ENCODE measurements at regions of chr18 and their contacts with region 1.

Region 1: GRCh38 chr18:74476140-74476539 is 19.0 kb upstream of the DIPK1C start:
- DNase-seq: no peak
- H3K4me3 ChIP-seq: no peak overlapping the region
- H3K27ac ChIP-seq: no peak overlapping the region
- H3K4me1 ChIP-seq: no peaks in the 10 kb centered on the region
- H3K27me3 ChIP-seq: no peaks in the 10 kb centered on the region
- CTCF ChIP-seq: no peak
- EP300 ChIP-seq: no peak
- POLR2A ChIP-seq: no peak

Region 2: DNA sequence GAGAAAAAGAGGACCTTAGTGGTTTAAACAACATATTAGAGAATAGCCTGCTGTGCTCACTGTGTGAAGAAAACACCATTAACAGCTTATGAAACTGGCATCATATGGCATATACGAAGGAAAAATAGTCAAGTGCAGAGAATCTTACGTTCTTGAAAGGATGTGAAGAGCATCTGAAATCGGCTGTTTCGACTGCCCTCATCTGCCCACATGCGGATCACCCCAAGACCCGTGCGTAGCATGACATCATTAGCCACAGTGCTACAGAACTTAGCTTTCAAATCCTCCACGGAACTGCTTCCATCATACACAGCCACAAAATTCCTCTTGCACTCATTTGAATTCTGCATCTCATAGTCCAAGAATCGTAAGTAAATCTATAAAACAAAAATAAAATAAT is 1692.6 kb before region 1 on chr18:
- intact Hi-C with region 1: no loop called
- DNase-seq: no peak
- H3K4me3 ChIP-seq: no peak overlapping the region
- H3K27ac ChIP-seq: no peak overlapping the region
- H3K4me1 ChIP-seq: no peaks in the 10 kb centered on the region
- H3K27me3 ChIP-seq: no peaks in the 10 kb centered on the region
- CTCF ChIP-seq: no peak
- EP300 ChIP-seq: no peak
- POLR2A ChIP-seq: no peak

Region 3: DNA sequence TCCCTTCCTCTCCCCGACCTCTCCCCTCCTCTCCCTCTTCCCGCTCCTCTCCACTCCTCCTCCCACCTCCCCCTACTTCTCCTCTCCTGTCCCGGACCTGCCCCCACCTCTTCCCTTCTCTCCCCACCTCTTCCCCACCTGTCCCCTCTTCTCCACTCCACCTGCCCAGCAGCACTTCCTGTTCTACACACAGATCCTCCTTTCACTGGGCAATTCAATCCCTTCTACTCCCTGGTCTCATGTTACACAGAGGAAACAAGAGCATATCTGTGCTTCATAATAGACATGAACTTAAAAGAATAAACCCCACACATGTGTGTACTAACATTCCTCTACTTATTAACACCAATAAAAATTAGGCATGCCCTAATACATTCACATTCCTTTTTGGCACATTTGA is 293.0 kb before region 1 on chr18:
- intact Hi-C with region 1: loop called in 1 of 4 experiments (anchors 10 kb)
- DNase-seq: no peak
- H3K4me3 ChIP-seq: no peak overlapping the region
- H3K27ac ChIP-seq: no peak overlapping the region
- H3K4me1 ChIP-seq: no peaks in the 10 kb centered on the region
- H3K27me3 ChIP-seq: no peaks in the 10 kb centered on the region
- CTCF ChIP-seq: no peak
- EP300 ChIP-seq: no peak
- POLR2A ChIP-seq: no peak

Region 4: DNA sequence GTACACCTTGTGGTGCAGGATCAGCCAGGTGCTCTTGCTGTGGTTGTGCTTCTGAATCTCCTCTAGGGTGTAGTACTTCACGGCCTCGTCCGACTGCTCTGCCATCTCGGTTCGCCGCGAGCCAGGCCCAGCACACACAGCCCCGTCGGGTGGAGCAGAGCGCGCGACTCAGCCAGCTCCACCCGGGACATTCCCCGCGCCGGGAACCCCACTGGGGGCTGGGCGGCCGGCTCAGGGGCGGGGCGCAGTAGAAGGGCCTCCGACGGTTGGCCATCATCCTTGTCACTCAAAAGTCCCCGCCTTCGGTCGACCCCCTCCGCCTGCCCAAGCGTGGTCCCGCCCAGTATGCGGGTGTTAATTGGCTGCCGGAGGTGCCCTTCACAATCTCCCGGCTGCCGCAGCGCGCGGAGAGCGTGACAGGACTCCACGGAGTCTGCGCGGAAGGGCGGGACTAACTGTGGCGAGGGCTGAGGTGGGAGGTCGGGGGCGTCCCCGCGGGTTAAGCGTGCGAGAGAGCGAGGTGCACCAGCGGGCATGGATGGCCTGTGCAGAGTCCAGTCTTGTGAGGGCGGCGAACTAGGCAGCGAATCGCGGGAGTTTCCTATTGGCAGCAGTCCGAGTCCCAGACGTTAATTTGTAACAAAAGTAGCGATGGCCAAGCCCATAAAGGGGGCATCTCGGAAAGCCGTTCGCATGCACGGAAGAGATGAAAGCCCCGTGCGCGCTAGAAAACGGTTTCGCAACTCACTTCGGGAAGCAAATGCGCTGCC is 184.2 kb before region 1 on chr18 and contains the start of gene CYB5A:
- intact Hi-C with region 1: no loop called
- DNase-seq: peak; percentile 98 to 100 (median 99)
- H3K4me3 ChIP-seq: peak within 1 kb of the TSS; percentile 91
- H3K27ac ChIP-seq: peak within 1 kb of the TSS; percentile 48 to 64
- H3K4me1 ChIP-seq: peaks cover 7% of the 10 kb centered on the region
- H3K27me3 ChIP-seq: no peaks in the 10 kb centered on the region
- CTCF ChIP-seq: no peak
- EP300 ChIP-seq: no peak
- POLR2A ChIP-seq: peak; percentile 46
- total RNA-seq, gene CYB5A: 158 to 454 (median 293) TPM

Measured in ovary (tissue), 10 donors.